Activated CD4-positive, alpha-beta T cell treated with anti-CD3 and anti-CD28 coated beads, Interleukin-2, amount 10 ng/mL, durations not matched to agents 24 days and 14 days (primary cell): ENCODE measurements at regions of chr6 and their contacts with region 1.

Region 1: DNA sequence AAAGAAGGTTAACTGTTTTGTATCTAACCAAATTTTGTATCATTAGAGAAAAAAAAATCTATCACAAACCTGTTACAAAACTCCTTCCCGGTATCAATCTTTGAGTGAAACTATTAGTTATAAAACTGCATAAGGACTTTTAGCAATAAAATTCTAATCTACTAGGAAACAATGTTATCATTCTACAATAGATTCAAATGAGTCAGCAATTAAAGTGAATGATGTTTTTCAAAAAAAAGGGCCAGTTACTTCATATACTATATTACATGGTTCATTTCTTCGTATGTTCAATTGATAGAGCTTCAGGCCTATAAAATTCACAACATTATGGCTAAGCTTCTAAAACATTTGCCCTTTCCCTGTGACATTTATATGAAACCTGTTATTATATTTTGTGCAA is 15.6 kb downstream of the ASCC3 start:
- DNase-seq: no peak
- H3K4me3 Mint-ChIP-seq: no peak overlapping the region
- H3K27ac Mint-ChIP-seq: no peak overlapping the region
- H3K4me1 Mint-ChIP-seq: peaks cover 5% of the 10 kb centered on the region
- H3K27me3 Mint-ChIP-seq: no peaks in the 10 kb centered on the region

Region 2: DNA sequence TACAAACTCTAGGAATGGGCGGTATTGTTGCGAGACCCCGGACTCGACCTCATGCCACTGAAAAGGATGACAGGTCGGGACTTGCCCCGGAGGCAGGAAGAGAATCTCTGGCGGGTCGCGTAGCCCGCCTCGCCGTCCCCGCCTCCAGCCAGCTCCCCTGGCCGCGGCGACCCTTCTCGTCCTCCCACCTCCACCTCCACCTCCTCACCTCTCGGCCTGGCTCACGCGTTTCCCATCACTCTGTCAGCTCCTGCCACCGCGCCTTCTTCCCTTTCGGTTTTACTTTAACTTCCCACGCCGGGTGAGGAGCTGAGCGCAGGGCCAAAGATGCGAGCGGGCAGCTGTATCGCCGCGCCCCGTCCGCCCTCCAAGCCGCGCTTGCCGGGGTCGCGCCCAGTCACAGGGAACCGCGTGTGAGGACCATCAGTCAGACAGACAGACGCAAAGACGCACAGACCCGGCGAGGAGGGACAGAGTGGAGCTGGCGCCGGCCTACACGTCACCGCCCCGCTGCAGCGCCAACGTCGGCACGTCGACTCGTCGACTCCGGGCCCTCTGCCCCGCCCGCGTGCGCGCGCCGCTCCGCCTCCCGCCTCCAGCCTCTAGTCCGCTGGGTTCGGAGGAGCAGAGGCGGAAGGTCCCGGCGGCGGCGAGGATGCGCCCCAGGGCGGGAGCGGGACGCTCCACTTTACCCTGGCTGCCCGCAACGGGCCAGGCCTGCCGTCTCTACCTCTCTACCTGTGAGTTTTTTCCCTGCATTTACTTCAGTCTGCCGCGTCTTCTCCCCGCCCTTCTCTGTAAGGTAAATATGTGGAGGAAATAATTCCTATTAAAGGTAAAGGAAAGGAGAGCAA is 15.6 kb after region 1 on chr6 and contains the start of gene ASCC3:
- intact Hi-C with region 1: loop called (anchors 2 kb)
- DNase-seq: peak; percentile 98
- H3K4me3 Mint-ChIP-seq: peak within 1 kb of the TSS; percentile 100
- H3K27ac Mint-ChIP-seq: peak within 1 kb of the TSS; percentile 100
- H3K4me1 Mint-ChIP-seq: peaks cover 38% of the 10 kb centered on the region
- H3K27me3 Mint-ChIP-seq: peaks cover 2% of the 10 kb centered on the region
- total RNA-seq, gene ASCC3: 65.6 and 68.9 TPM in 2 replicates

Region 3: DNA sequence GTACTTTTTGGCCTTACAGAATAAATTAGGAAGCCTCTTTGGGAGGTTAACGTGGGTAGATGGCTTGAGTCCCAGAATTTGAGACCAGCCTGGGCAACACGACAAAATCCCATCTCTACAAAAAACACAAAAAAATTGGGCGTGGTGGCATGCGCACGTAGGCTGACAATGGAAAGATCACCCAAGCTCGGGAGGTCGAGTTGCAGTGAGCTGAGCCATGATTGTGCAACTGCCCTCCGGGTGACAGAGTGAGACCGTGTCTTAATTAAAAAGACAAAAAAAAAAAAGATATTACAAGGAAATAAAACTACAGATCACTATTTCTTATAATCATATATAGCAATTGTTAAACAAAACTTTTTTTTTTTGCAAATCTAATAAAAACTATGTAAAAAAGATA is 59.0 kb after region 1 on chr6:
- intact Hi-C with region 1: no loop called
- DNase-seq: no peak
- H3K4me3 Mint-ChIP-seq: no peak overlapping the region
- H3K27ac Mint-ChIP-seq: no peak overlapping the region
- H3K4me1 Mint-ChIP-seq: no peaks in the 10 kb centered on the region
- H3K27me3 Mint-ChIP-seq: no peaks in the 10 kb centered on the region